ENCODE measurements at regions of chr18 and their contacts with region 1.

Region 1: DNA sequence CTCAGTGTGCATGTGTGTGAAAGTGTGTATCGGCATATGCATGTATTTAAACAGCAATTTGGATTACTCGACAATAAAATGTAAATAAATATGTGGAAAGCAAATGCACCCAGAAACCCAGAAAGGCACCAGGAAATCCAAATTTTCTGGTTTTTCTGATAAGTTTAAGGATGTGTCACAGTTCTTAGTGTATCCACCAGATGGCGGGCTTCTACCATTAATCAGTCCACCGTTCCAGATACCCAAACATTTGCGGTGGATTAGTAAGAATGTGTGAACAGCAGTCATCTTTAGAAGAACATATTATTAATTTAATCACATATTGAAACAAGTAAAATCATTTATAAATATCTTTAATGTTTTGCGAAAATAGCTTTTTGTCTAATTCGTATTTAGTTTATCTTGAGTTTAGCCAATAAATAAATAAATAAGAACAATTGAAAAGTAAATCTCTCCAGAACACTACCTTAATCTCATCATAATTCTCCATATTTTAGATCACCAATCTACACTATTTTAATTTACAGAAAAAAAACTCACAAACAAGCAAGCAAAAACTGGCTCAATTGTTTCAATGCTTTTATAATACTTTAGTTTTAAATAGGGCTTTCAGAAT is 298.9 kb downstream of the DSEL start:
- DNase-seq: peak; percentile 71
- H3K4me3 ChIP-seq: no peak overlapping the region
- H3K27ac ChIP-seq: no peak overlapping the region
- H3K4me1 ChIP-seq: no peaks in the 10 kb centered on the region
- H3K27me3 ChIP-seq: no peaks in the 10 kb centered on the region
- CTCF ChIP-seq: peak; percentile 41 to 77 (median 68)
- EP300 ChIP-seq: no peak
- POLR2A ChIP-seq: no peak

Region 2: DNA sequence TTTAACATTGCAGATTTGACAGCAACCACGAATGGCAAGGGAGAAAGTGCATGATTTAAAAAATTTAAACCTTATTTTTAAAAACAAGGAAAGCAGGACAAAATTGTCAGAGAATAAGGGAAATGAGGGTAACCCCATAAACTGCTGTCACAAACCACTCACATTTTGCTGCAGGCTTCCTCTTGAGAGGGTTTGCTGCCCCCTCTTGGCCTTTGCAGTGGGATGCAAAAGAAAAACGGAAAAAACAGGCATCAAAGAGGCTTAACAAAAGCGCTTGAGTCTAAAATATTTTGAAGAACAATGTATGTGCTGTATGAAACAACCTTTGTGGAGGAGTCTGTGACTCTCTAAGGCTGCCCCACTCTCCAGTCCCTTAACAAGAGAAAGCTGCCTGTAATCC is 1405.7 kb after region 1 on chr18:
- intact Hi-C with region 1: loop called (anchors 10 kb)
- DNase-seq: peak; percentile 66
- H3K4me3 ChIP-seq: no peak overlapping the region
- H3K27ac ChIP-seq: no peak overlapping the region
- H3K4me1 ChIP-seq: no peaks in the 10 kb centered on the region
- H3K27me3 ChIP-seq: no peaks in the 10 kb centered on the region
- CTCF ChIP-seq: peak in 3 of 4 experiments; percentile 36 to 66 (median 53)
- EP300 ChIP-seq: no peak
- POLR2A ChIP-seq: no peak

Region 3: GRCh38 chr18:68660354-68661183 is 1442.9 kb after region 1 on chr18:
- intact Hi-C with region 1: loop called (anchors 1 kb)
- DNase-seq: no peak
- H3K4me3 ChIP-seq: no peak overlapping the region
- H3K27ac ChIP-seq: no peak overlapping the region
- H3K4me1 ChIP-seq: peaks cover 0 to under 1% (median 0%) of the 10 kb centered on the region in 4 donors
- H3K27me3 ChIP-seq: no peaks in the 10 kb centered on the region
- CTCF ChIP-seq: peak in 3 of 4 experiments; percentile 16 to 56 (median 36)
- EP300 ChIP-seq: no peak
- POLR2A ChIP-seq: no peak

Region 4: DNA sequence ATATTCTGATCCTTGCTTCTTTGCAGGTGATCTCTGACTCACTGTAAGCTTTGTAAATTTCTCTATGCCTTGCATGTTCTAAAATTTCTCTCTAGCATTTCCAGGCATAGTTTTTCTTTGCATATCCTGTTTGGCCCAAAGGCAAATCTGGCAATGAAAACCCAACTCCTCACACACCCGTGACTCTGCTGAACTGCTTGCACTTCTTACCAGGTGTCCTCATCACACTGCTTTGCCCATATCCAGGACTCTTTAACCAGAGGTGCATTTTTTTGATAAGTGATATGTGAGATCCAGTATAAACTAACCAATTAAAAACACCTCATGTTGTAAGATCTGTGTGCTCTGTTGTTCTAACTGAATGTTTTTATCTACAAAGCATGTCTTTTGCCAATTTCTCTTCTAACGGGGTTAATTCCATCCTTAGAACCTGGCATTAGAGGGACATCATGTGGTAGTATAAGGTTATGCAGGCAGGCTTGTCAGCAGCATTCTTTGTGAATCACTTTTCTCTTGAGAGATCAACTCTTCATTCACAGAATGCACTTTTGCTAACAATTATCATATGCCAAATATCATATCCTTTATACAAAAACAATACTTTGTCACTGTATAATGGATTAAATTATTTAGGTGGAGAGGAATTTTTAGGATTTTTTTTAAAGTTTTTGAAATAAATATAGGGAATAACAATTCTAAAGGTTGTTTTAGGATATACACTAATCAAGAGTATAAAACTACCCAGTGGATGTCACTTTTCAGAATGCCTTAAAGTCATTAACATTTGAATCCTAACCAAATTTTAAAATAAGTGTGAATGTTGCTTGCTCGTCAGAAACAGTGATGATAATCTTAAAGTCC is 1518.1 kb after region 1 on chr18:
- intact Hi-C with region 1: loop called (anchors 10 kb)
- DNase-seq: no peak
- H3K4me3 ChIP-seq: no peak overlapping the region
- H3K27ac ChIP-seq: no peak overlapping the region
- H3K4me1 ChIP-seq: no peaks in the 10 kb centered on the region
- H3K27me3 ChIP-seq: no peaks in the 10 kb centered on the region
- CTCF ChIP-seq: peak in 3 of 4 experiments; percentile 33 to 62 (median 45)
- EP300 ChIP-seq: no peak
- POLR2A ChIP-seq: no peak

Measured in sigmoid colon (tissue), 7 donors.